ENCODE measurements at regions of chr4 and their contacts with region 1.

Region 1: DNA sequence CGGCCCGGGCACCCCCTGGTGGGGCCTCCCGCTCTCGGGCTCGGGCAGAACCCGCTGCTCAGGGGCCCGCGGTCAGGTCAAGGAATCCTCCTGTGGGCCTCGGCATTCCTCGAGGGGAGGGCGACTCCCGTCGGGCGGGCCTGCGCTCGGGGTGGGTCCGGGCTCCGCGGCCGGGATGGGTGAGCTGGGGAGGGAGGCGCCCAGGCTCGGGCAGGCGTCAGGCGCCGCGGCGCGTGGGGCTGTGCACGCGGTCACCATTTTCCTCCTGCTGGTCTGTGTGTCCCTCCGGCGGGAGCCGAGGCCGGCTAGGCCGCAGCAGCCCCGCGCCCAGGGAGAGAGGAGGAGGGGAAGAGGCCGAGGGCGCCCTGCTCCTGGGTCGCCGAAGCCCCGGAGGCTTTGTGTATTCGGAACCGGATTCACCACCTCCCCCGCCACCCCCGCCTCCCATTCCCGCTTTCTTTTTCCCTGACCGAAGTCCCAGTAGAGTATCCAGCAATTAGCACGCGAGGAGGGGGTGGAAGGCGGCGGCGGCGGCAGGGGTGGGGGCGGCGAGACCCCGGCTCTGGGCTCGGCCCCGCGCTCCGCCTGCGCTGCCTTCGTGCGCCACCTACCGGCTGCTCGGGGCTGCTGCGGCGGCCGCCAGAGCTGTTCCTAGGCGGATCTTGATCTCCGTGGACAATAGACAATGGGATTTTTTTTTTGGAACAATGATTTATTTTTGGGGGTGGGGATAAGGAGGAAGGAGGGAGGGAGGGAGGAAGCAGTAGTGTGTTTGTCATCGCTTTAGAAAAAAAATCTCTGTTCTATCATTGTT is 99.0 kb upstream of the MAML3 start:
- DNase-seq: peak; percentile 92

Region 2: GRCh38 chr4:139734875-139735380 is 518.0 kb before region 1 on chr4:
- intact Hi-C with region 1: loop called (anchors 2 kb)
- DNase-seq: peak; percentile 95

Region 3: GRCh38 chr4:140049024-140049848 is 203.7 kb before region 1 on chr4:
- intact Hi-C with region 1: loop called (anchors 2 kb)
- DNase-seq: peak; percentile 79

Region 4: GRCh38 chr4:140237606-140237986 is 15.4 kb before region 1 on chr4:
- intact Hi-C with region 1: loop called (anchors 2 kb)
- DNase-seq: peak; percentile 85

Region 5: DNA sequence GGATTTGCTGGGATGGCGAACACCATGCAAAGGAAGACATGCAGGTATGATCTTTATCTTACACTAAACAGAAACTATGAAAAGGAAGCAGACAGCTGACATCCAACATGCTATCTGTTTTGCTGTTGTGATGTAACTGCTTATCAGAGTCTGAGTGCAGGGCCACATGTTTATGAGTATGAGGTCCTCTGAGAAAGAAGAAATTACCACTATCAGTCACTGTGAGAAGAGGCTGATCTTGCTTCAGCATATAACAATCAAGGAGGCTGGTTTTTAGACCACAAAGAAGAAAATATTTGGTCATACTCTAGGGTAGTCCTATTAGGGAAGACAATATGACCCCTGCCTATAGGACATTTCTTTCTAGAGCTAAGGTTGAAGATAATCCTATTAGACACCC is 156.0 kb after region 1 on chr4:
- intact Hi-C with region 1: no loop called
- DNase-seq: no peak

Measured in cardiac septum (tissue), 1 donor.